ENCODE measurements at regions of chrX and their contacts with region 1.

Region 1: GRCh38 chrX:149286940-149287349 is 218.2 kb downstream of the IDS start:
- DNase-seq: no peak
- ATAC-seq: no peak
- H3K4me3 Mint-ChIP-seq: no peak overlapping the region
- H3K27ac Mint-ChIP-seq: no peak overlapping the region
- H3K4me1 Mint-ChIP-seq: no peaks in the 10 kb centered on the region
- H3K27me3 Mint-ChIP-seq: peaks cover 2% of the 10 kb centered on the region
- CTCF ChIP-seq: no peak

Region 2: DNA sequence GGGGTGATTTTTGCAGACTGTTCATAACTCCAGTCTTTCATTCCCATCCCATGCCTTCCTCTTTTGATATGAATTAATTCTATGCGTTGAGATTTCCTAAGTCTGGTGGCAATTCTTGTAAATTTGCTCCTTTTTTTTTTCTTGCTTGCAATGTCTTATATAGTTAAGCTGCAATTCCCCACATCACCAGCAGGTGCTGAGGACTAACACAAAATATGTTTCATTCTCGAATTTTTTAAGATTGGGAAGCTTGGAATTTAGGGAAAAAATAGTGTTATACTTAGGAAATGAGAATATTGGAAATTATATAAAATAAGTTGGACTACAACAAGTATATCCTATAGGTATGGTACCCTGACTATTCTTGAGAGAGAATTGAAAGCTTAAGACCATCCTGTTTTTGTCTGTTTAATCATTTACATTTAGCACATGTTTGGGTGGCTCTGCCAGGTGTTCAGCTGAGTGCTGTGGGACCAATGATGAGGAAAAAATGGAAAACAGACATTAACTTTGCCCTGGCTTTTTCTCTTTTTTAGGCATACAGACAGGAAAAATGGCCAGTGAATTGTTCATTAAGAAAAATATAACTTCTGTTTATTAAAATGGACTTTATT is 756.4 kb before region 1 on chrX:
- CTCF ChIA-PET with region 1: no interaction called
- POLR2A ChIA-PET with region 1: no interaction called
- intact Hi-C with region 1: loop called (anchors 5 kb)
- DNase-seq: no peak
- ATAC-seq: no peak
- H3K4me3 Mint-ChIP-seq: no peak overlapping the region
- H3K27ac Mint-ChIP-seq: no peak overlapping the region
- H3K4me1 Mint-ChIP-seq: no peaks in the 10 kb centered on the region
- H3K27me3 Mint-ChIP-seq: no peaks in the 10 kb centered on the region
- CTCF ChIP-seq: no peak

Region 3: GRCh38 chrX:149205937-149206336 is 81.0 kb before region 1 on chrX:
- CTCF ChIA-PET with region 1: no interaction called
- POLR2A ChIA-PET with region 1: no interaction called
- intact Hi-C with region 1: no loop called
- DNase-seq: no peak
- ATAC-seq: no peak
- H3K4me3 Mint-ChIP-seq: no peak overlapping the region
- H3K27ac Mint-ChIP-seq: no peak overlapping the region
- H3K4me1 Mint-ChIP-seq: no peaks in the 10 kb centered on the region
- H3K27me3 Mint-ChIP-seq: no peaks in the 10 kb centered on the region
- CTCF ChIP-seq: no peak

Region 4: GRCh38 chrX:149470955-149471354 is 184.0 kb after region 1 on chrX:
- CTCF ChIA-PET with region 1: interaction called, 3 read pairs
- POLR2A ChIA-PET with region 1: no interaction called
- intact Hi-C with region 1: loop called (anchors 2 kb)
- DNase-seq: peak; percentile 34
- ATAC-seq: peak; percentile 70
- H3K4me3 Mint-ChIP-seq: no peak overlapping the region
- H3K27ac Mint-ChIP-seq: no peak overlapping the region
- H3K4me1 Mint-ChIP-seq: peaks cover 3% of the 10 kb centered on the region
- H3K27me3 Mint-ChIP-seq: peaks cover 3% of the 10 kb centered on the region
- CTCF ChIP-seq: no peak